ENCODE measurements at regions of chr11 and their contacts with region 1.

Region 1: GRCh38 chr11:70755410-70756161 is 357.3 kb downstream of the CTTN start:
- DNase-seq: peak; percentile 85
- H3K4me3 ChIP-seq: no peak overlapping the region
- H3K27ac ChIP-seq: no peak overlapping the region
- H3K4me1 ChIP-seq: no peaks in the 10 kb centered on the region
- H3K27me3 ChIP-seq: peaks cover 14% of the 10 kb centered on the region
- CTCF ChIP-seq: peak; percentile 98

Region 2: DNA sequence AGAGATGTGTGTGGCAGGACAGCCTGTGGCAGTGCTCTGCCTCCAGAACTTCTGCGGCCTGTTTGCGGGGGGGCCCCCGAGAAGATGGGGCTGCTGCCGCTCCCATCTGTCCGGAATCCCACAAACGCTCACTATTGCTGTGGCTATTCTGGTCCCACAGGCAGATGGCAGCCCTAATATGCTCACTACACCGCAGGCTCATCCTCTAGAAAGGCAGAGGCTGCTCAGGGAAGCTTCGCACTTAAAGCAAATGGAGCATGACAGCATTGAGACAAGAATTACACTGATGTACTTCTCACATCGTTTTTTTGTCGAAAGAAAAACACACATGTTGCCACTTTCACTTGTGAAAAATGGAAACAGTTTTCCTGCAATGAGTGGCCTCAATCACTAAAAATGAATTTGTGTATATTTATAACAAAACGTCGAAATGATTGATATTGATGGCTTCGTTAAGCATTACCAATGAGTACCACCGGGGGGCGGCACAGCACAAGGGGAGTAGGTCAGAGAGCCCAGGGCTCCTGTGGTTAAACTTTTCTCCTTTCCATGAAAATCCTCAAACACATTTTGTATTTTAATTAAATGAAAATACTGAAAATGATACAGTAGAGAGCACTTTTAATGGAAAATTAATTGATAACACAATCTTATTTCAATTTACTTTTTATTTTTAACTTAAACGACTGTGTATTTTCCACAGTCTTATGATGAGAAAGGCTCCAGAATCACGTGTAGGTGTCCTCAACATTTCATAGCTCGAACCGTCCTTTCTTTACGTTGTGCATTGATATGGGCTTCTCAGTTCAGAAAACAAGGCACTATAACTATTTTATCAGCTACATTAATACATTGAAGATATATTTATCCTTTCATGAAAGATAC is 288.1 kb before region 1 on chr11:
- CTCF ChIA-PET with region 1: interaction called, 6 read pairs
- POLR2A ChIA-PET with region 1: no interaction called
- intact Hi-C with region 1: loop called (anchors 1 kb)
- DNase-seq: peak; percentile 74
- H3K4me3 ChIP-seq: no peak overlapping the region
- H3K27ac ChIP-seq: no peak overlapping the region
- H3K4me1 ChIP-seq: no peaks in the 10 kb centered on the region
- H3K27me3 ChIP-seq: no peaks in the 10 kb centered on the region
- CTCF ChIP-seq: peak; percentile 99

Region 3: DNA sequence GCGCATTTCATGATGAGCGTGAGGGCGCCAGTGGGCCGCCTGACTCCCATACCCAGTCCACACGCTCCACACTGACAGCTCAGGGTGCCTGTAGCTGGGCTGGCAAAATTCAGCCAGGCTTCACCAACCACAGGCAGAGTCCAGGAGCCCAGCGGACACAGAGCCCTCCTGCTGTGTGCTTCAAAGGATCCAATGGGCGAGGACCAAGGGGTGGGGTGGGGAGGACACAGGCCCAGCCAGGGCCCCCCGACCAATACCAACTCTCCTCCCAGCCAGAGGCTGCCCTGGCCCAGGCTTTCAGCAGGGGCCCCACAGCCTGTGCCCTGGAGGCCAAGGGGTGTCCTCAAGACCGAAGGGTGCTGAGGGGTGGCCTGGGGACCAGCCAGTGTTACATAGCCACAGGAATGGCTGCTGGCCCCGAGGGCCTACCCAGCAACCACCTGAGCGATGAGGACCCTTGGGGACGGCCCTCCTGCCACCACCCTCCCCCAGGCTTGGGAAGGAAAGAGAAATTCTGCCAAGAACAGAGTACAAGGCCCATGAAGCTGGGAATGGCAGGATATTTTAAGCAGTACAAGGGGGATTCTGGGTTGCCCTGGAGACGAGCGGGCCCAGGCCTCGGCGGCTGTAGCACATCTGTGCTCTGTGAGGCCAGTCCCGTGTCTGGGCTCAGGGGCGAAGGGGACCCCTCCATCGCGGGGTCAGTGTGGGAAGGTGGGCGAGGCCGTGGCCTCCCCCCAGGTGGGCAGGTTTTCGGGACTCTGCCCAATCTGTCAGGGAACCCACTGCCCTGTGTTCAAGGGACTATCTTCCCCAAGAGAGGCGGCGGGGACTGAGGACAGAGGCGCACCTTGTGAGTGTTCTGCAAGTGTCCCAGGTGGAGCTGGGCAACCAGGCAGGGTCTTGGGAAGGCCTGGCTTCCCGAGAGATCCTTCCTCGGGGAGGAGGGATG is 20.9 kb before region 1 on chr11:
- CTCF ChIA-PET with region 1: no interaction called
- POLR2A ChIA-PET with region 1: interaction called, 17 read pairs
- intact Hi-C with region 1: no loop called
- DNase-seq: no peak
- H3K4me3 ChIP-seq: no peak overlapping the region
- H3K27ac ChIP-seq: no peak overlapping the region
- H3K4me1 ChIP-seq: no peaks in the 10 kb centered on the region
- H3K27me3 ChIP-seq: no peaks in the 10 kb centered on the region
- CTCF ChIP-seq: no peak

Region 4: GRCh38 chr11:70804139-70804837 is 48.7 kb after region 1 on chr11:
- CTCF ChIA-PET with region 1: no interaction called
- POLR2A ChIA-PET with region 1: no interaction called
- intact Hi-C with region 1: no loop called
- DNase-seq: no peak
- H3K4me3 ChIP-seq: no peak overlapping the region
- H3K27ac ChIP-seq: no peak overlapping the region
- H3K4me1 ChIP-seq: no peaks in the 10 kb centered on the region
- H3K27me3 ChIP-seq: no peaks in the 10 kb centered on the region
- CTCF ChIP-seq: no peak

Measured in A673 (cell line).